CD14-positive monocyte (primary cell): ENCODE measurements at regions of chr16 and their contacts with region 1.

Region 1: DNA sequence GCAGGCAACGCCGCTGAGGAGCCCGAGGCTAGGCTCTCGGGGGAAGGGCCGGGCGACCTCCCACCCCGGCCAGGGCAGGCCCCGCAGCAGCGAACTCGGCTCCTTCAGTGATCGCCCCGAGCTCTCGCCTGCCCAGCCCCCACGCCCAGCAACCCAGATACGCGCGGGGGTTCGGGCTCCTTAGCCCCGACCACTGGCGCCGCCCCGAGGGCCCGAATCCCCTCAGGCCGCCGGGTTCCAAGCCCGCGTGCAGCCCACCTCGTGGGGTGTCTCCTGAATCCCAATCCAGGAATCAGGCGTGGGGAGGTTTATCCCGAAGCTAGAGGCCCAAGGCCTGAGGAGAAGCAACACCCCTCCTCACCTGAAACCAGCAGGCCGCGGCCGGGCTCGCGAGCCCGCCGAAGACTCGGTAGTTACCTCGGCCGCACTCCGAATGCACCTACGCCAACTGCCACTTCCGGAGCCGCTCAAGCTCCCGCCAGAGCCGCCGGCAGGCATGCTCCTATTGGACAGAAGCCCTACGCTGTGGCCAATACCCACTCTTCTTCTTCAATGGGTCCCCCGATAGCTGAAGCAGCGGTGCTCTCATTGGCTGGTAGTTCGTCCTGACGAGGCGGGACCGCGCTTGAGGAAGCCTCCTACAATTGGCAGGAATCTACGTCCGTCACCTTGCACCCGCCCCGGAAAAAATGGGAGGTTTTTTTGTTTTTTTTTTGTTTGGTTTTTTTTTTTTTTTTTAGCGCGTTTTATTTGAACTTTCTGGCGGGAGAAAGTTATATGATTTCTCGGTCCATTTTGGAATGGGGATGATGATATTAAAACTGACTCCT is at the start of gene RFWD3:
- DNase-seq: peak; percentile 97 to 99 (median 99)
- H3K4me3 ChIP-seq: peak within 1 kb of the TSS; percentile 97 to 99 (median 97)
- H3K4me3 Mint-ChIP-seq: peak within 1 kb of the TSS; percentile 90 to 95
- H3K27ac ChIP-seq: peak within 1 kb of the TSS; percentile 33 to 82
- H3K27ac Mint-ChIP-seq: peak within 1 kb of the TSS; percentile 80 to 90 (median 87)
- H3K4me1 ChIP-seq: peaks cover 14 to 25% of the 10 kb centered on the region in 2 donors
- H3K4me1 Mint-ChIP-seq: peaks cover 15% of the 10 kb centered on the region
- H3K27me3 ChIP-seq: no peaks in the 10 kb centered on the region
- H3K27me3 Mint-ChIP-seq: peaks cover 0 to 1% (median 0%) of the 10 kb centered on the region in 3 donors
- CTCF ChIP-seq: no peak
- polyA plus RNA-seq, gene RFWD3: 5.0 to 8.4 (median 8.4) TPM

Region 2: GRCh38 chr16:74296432-74297144 is 370.1 kb before region 1 on chr16 and contains the start of gene PSMD7:
- intact Hi-C with region 1: loop called in 1 of 2 experiments (anchors 5 kb)
- DNase-seq: peak; percentile 84 to 89 (median 87)
- H3K4me3 ChIP-seq: peak within 1 kb of the TSS; percentile 83 to 92 (median 84)
- H3K4me3 Mint-ChIP-seq: peak within 1 kb of the TSS; percentile 94 to 96
- H3K27ac ChIP-seq: peak within 1 kb of the TSS; percentile 93 to 97
- H3K27ac Mint-ChIP-seq: peak within 1 kb of the TSS; percentile 95 to 99 (median 98)
- H3K4me1 ChIP-seq: peaks cover 21 to 31% of the 10 kb centered on the region in 2 donors
- H3K4me1 Mint-ChIP-seq: peaks cover 25% of the 10 kb centered on the region
- H3K27me3 ChIP-seq: no peaks in the 10 kb centered on the region
- H3K27me3 Mint-ChIP-seq: no peaks in the 10 kb centered on the region
- CTCF ChIP-seq: no peak
- polyA plus RNA-seq, gene PSMD7: 61.3 to 118 (median 96.7) TPM

Region 3: GRCh38 chr16:74700438-74701225 is 34.0 kb after region 1 on chr16 and contains the start of gene MLKL:
- intact Hi-C with region 1: loop called in 1 of 2 experiments (anchors 2 kb)
- DNase-seq: peak; percentile 79 to 84 (median 81)
- H3K4me3 ChIP-seq: peak within 1 kb of the TSS; percentile 69 to 94 (median 92)
- H3K4me3 Mint-ChIP-seq: peak within 1 kb of the TSS; percentile 98 to 100
- H3K27ac ChIP-seq: peak within 1 kb of the TSS; percentile 94 to 96
- H3K27ac Mint-ChIP-seq: peak within 1 kb of the TSS; percentile 96 to 99 (median 99)
- H3K4me1 ChIP-seq: peaks cover 63 to 73% of the 10 kb centered on the region in 2 donors
- H3K4me1 Mint-ChIP-seq: peaks cover 65% of the 10 kb centered on the region
- H3K27me3 ChIP-seq: no peaks in the 10 kb centered on the region
- H3K27me3 Mint-ChIP-seq: no peaks in the 10 kb centered on the region
- CTCF ChIP-seq: no peak
- polyA plus RNA-seq, gene MLKL: 33.6 to 136 (median 37.8) TPM

Region 4: DNA sequence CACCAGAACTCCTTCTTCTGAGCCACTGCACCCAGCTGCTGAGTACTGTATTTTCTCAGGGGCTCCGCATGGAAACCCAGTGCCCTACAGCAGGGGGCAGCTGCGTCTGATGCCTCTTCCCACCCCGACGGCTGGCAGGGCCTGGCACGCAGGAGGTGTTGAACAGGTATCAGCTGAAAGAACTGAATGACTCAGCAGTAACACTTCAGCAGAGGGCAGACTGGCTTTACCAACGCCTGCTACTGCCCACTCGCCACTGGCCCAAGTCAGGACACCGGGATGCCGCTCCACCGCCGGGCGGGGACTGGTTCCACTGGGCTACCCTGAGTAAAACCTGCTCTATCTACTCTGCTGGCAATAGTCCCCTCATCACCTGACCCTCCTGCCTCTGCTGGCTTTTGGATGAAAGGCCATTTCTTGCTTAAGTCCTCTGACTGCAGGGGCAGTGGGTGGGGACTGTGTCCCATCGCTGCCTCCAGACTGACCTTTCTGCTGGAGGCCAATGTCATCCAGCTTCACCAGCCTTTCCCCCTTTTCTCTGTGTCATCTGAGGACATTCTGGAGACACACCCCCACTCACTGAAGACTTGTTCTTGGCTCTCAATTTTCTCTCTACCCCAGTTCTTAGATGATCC is 208.4 kb after region 1 on chr16:
- intact Hi-C with region 1: no loop called
- DNase-seq: no peak
- H3K4me3 ChIP-seq: no peak overlapping the region
- H3K4me3 Mint-ChIP-seq: no peak overlapping the region
- H3K27ac ChIP-seq: no peak overlapping the region
- H3K27ac Mint-ChIP-seq: peak overlapping the region in 2 of 7 donors; percentile 17 to 37
- H3K4me1 ChIP-seq: no peaks in the 10 kb centered on the region
- H3K4me1 Mint-ChIP-seq: peaks cover 3% of the 10 kb centered on the region
- H3K27me3 ChIP-seq: no peaks in the 10 kb centered on the region
- H3K27me3 Mint-ChIP-seq: peaks cover 0 to 2% (median 0%) of the 10 kb centered on the region in 3 donors
- CTCF ChIP-seq: no peak